RWPE1 (cell line): ENCODE measurements at regions of chr19 and their contacts with region 1.

Region 1: GRCh38 chr19:11422163-11423021 is 3.3 kb upstream of the RGL3 start:
- DNase-seq: peak; percentile 94
- H3K27ac ChIP-seq: peak overlapping the region; percentile 70
- CTCF ChIP-seq: no peak

Region 2: GRCh38 chr19:11435058-11435832 is 12.9 kb after region 1 on chr19 and contains the starts of genes ODAD3 and PRKCSH:
- CTCF ChIA-PET with region 1: interaction called, 12 read pairs
- POLR2A ChIA-PET with region 1: no interaction called
- DNase-seq: peak; percentile 100
- H3K27ac ChIP-seq: peak within 1 kb of the TSS; percentile 84
- CTCF ChIP-seq: peak; percentile 90